PC-9 (cell line): ENCODE measurements at regions of chr1 and their contacts with region 1.

Region 1: DNA sequence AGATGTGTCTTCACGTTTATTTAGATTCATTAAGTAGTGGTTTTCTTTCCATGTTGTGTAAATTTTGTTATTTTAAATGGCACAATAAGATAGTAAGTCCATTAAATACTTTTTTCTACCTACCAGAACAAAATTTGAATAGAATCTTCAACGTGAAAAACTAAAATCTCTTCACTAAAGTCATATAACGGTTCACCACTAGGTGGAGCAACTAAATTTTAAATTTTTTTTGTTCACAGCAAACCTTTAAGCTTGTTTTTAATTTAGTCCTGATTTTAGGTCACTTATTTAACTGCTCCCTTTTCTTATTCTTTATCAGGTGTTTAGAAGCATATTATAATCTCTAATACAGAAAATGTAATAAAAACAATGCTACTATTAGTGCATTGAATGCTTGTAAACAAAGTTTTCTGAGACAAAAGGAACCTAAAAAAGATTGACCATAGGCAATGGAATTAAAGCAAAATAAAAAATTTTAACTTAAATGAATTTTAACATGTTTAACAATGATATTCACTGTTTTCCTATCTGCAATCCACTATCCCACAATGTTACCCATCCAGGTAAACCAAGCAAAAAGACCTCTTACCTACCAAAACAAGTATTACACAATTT is 28.3 kb upstream of the PKN2 start:
- DNase-seq: no peak
- H3K4me3 ChIP-seq: no peak overlapping the region
- H3K27ac ChIP-seq: no peak overlapping the region
- H3K4me1 ChIP-seq: peaks cover 16% of the 10 kb centered on the region
- H3K27me3 ChIP-seq: no peaks in the 10 kb centered on the region
- CTCF ChIP-seq: peak; percentile 93

Region 2: DNA sequence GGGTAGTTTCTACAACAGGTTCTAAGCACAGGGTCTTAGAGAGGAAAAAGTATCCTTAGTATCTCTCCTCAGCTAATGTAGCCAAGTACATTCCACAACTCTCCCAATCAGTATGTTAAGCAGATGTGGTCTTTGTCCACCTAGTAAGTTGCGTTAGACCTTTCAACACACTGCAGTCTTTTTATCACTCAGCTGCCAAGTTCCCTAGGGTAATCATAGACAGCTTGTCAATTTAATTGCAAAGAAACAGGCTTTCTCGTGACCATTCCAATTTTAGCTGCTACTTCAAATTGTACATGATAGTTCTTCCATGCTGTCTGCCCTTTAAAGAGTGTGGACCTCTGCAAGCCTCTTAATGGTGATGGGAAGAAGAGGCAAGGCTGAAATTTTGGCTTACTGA is 183.5 kb before region 1 on chr1:
- CTCF ChIA-PET with region 1: no interaction called
- POLR2A ChIA-PET with region 1: no interaction called
- intact Hi-C with region 1: no loop called
- DNase-seq: no peak
- H3K4me3 ChIP-seq: no peak overlapping the region
- H3K27ac ChIP-seq: no peak overlapping the region
- H3K4me1 ChIP-seq: no peaks in the 10 kb centered on the region
- H3K27me3 ChIP-seq: no peaks in the 10 kb centered on the region
- CTCF ChIP-seq: no peak

Region 3: DNA sequence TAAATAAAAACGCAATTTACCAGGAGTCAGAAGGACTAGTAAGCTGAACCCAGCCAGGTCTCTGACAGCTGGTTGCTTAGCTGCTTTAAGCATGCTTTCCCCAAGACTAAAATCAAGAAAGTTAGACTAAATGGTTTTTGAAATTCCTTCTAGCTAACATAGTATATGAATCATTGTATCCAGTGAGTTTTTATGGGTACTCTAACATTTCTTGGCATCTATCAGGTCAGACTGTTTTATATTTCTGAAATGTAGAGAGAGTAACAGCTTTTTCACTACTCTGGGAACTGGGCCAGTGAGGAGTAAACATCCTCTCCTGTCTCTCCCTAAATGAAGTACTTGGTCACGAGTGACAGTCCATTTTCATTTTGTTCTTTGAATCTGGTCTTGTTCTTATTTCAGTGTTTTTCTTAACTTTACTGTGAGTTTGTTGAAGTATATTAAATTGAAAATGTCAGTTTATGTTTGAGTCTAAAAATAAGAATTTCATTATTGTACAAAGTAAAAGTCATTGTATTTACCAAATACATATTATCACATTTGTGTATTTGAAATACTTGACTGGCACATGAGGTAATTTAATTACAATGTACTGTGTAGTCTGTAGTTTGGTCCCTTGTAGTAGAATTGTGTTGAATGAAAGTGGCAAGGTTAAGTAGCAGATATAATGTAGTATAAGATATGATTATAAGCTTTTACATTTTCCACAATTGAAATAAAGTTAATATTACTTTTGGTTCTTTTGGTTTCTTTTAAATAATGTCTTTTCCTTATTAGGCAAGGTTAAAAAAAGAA is 75.9 kb after region 1 on chr1:
- CTCF ChIA-PET with region 1: no interaction called
- POLR2A ChIA-PET with region 1: interaction called, 11 read pairs
- intact Hi-C with region 1: no loop called
- DNase-seq: no peak
- H3K4me3 ChIP-seq: no peak overlapping the region
- H3K27ac ChIP-seq: 0 out of 2 replicates have a peak overlapping the region, but pooled peaks have one; percentile 4
- H3K4me1 ChIP-seq: no peaks in the 10 kb centered on the region
- H3K27me3 ChIP-seq: no peaks in the 10 kb centered on the region
- CTCF ChIP-seq: no peak

Region 4: DNA sequence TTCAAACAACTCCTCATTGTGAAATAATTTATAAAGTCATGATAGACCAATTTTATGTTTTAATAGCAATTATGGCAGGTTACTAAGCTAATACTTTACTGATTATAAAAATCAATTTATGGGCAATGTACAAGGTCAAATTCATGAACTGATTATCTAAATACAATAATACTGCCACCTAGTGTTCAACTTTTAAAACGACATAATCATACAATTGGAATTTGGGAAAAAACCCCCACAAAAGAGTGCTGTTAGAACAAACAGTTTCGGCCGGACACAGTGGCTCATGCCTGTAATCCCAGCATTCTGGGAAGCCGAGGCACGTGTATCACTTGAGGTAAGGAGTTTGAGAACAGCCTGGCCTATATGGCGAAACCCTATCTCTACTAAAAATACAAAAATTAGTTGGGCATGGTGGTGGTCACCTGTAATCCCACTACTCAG is 221.6 kb after region 1 on chr1:
- CTCF ChIA-PET with region 1: interaction called, 5 read pairs
- POLR2A ChIA-PET with region 1: interaction called, 14 read pairs
- intact Hi-C with region 1: loop called (anchors 5 kb)
- DNase-seq: peak in 1 of 2 experiments; percentile 53
- H3K4me3 ChIP-seq: no peak overlapping the region
- H3K27ac ChIP-seq: 0 out of 2 replicates have a peak overlapping the region, but pooled peaks have one; percentile 3
- H3K4me1 ChIP-seq: peaks cover 5% of the 10 kb centered on the region; the same call in 1 of the 2 replicates
- H3K27me3 ChIP-seq: no peaks in the 10 kb centered on the region
- CTCF ChIP-seq: peak; percentile 94

Region 5: DNA sequence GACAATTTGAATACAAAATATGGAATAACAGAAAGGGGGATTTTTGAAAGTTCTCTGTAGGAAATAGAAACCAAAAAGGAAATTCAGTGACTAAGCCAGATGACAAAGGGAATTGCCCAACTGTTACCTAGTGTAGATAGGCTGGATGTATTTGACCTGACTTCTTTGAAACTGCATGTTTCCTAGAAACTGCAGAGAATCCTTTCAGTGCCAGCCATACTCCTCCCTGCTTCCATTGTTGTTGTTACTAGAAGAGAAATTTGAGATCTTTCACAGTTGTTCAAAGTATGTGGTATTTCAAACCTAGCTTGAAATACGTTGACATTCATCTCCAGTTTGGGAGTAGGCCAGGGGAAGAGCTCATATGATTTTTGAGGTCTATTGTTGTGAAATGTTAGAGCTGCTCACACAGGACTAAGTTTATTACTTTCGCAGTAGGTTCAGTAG is 618.6 kb after region 1 on chr1:
- CTCF ChIA-PET with region 1: no interaction called
- POLR2A ChIA-PET with region 1: no interaction called
- intact Hi-C with region 1: no loop called
- DNase-seq: peak; percentile 13 to 51
- H3K4me3 ChIP-seq: no peak overlapping the region
- H3K27ac ChIP-seq: no peak overlapping the region
- H3K4me1 ChIP-seq: no peaks in the 10 kb centered on the region
- H3K27me3 ChIP-seq: no peaks in the 10 kb centered on the region
- CTCF ChIP-seq: no peak